ENCODE measurements at regions of chr2 and their contacts with region 1.

Region 1: DNA sequence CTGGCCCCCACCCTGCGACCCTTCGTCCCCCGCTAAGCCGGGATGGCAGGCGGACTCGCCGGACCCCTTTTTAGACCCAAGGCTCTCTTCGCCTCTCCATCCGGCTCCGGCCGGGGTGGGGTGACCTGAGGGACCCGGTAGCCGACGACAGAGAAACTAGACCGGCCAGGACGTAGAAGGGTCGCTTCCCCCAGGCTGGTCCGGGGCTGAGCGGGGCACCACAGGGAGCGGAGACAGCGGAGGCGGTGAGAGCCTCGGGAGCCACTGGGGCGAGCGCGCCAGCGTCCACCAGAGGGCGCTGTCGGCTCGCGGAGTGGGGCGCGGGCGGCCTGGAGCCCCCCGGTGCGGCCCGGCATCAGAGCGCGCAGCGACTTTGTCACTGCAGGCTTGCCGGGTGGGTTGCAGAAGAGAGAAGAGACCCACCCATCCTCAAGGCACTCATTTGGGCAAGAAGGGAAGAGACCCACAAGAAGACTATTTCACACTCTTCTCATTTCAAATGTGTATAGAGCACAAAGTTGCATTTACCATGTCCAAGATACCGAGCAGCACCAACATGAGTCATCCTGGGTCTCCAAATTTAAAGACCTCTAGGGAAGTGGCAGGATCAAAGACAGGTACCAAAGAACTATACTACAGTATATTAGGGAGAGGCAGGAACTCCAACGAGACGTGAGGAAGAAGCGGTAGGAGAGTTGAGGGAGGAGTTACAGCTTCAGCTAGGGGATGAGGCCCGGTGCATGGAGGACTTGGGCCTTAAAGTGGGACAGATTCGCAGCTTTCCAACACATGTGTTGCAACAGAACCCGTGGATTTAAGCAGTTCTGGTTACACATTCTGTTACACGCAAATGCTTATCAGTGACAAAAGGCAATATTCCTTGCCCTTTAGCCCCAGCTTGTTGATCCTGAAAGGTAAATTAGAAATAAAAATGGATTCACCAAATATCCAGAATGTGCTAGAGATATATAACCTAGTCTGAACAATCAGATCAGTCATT is 7.6 kb upstream of the PRKCE start:
- DNase-seq: peak; percentile 68
- H3K4me3 ChIP-seq: peak overlapping the region; percentile 53
- H3K27ac ChIP-seq: no peak overlapping the region
- H3K4me1 ChIP-seq: peaks cover 10% of the 10 kb centered on the region
- H3K27me3 ChIP-seq: no peaks in the 10 kb centered on the region
- CTCF ChIP-seq: peak; percentile 94

Region 2: GRCh38 chr2:45567288-45567963 is 76.4 kb before region 1 on chr2:
- intact Hi-C with region 1: no loop called
- DNase-seq: no peak
- H3K4me3 ChIP-seq: peak overlapping the region; percentile 13
- H3K27ac ChIP-seq: peak overlapping the region; percentile 67
- H3K4me1 ChIP-seq: no peaks in the 10 kb centered on the region
- H3K27me3 ChIP-seq: no peaks in the 10 kb centered on the region
- CTCF ChIP-seq: no peak

Region 3: DNA sequence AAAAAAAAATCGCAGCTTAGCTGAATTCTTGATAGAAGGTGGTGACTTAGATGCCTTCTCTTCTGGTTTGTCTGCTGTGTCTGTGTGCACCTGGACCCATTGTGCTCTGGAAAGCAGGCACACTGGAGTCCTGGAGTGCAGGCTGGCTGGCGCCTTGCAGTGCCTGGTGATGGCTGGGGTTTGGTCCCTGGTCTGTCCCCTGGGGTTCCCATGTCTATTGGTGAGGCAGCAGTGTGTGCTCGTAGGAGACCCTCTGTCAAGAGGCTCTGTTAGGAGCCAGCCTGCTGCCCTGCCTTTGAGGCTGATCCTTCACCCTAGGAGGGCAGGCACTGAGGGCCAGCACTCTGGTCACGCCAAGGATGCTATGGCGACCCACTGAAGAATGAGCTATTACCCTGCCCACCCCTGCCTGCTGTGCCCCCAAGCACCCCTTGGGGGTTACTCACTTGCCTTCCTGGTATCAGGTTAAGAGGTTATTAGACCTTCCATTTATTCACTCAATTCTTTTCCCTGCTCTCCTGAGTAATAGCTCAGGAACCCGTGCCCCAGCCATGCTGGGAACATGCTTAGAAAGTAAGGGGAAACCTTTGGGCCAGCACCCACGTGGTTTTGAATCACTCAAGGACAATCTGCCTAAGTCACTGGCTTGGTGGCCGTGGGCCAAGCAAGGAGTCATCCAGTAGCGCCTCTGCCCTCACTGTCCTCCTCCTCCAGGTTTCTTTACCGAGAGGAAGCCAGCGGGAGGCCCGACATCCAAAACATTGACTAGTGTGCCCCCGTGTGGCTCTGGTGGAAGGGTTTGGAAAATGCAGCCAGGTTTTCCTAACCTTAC is 292.2 kb after region 1 on chr2:
- intact Hi-C with region 1: loop called (anchors 2 kb)
- DNase-seq: peak; percentile 89
- H3K4me3 ChIP-seq: no peak overlapping the region
- H3K27ac ChIP-seq: no peak overlapping the region
- H3K4me1 ChIP-seq: peaks cover 5% of the 10 kb centered on the region
- H3K27me3 ChIP-seq: no peaks in the 10 kb centered on the region
- CTCF ChIP-seq: peak; percentile 62